Panc1 (cell line): ENCODE measurements at regions of chr6 and their contacts with region 1.

Region 1: GRCh38 chr6:28218271-28219248 is 6.5 kb upstream of the ZSCAN9 start:
- DNase-seq: no peak
- ATAC-seq: peak; percentile 90
- H3K4me3 ChIP-seq: peak overlapping the region; percentile 55 to 77
- H3K27ac ChIP-seq: peak overlapping the region; percentile 92
- H3K4me1 ChIP-seq: peaks cover 33% of the 10 kb centered on the region
- H3K27me3 ChIP-seq: no peaks in the 10 kb centered on the region
- CTCF ChIP-seq: no peak

Region 2: DNA sequence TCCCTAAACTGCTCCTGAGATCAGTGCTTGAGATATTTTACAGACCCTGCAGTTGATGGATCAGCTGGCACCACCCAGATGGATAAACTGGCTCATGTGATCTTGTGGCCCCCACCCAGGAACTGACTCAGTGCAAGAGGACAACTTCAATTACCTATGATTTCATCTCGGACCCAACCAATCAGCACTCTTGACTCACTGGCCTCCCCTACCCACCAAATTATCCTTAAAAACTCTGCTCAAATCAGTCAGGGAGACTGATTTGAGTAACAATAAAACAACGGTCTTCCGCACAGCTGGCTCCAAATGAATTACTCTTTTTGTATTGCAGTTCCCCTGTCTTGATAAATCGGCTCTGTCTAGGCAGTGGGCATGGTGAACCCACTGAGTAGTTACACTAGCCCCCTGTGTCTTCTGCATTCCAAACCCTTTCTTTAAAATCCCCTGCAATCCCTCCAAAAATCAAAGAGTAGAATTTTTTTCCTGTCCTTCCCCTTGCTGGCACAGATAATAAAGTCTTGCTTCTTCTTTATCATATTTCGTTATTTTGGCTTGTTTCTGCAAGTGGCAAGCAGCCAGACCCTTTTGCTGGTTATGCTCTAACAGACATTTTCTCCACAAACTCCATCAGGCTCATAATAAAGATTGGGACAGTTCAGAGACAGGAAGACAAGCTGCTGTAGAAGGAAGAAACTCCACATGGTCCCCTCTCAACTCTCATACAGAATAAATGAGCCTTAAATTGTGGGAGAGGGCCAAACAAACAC is 213.3 kb before region 1 on chr6:
- CTCF ChIA-PET with region 1: no interaction called
- POLR2A ChIA-PET with region 1: no interaction called
- in situ Hi-C with region 1: no loop called
- intact Hi-C with region 1: no loop called
- DNase-seq: no peak
- ATAC-seq: no peak
- H3K4me3 ChIP-seq: no peak overlapping the region
- H3K27ac ChIP-seq: no peak overlapping the region
- H3K4me1 ChIP-seq: no peaks in the 10 kb centered on the region
- H3K27me3 ChIP-seq: no peaks in the 10 kb centered on the region
- CTCF ChIP-seq: no peak

Region 3: DNA sequence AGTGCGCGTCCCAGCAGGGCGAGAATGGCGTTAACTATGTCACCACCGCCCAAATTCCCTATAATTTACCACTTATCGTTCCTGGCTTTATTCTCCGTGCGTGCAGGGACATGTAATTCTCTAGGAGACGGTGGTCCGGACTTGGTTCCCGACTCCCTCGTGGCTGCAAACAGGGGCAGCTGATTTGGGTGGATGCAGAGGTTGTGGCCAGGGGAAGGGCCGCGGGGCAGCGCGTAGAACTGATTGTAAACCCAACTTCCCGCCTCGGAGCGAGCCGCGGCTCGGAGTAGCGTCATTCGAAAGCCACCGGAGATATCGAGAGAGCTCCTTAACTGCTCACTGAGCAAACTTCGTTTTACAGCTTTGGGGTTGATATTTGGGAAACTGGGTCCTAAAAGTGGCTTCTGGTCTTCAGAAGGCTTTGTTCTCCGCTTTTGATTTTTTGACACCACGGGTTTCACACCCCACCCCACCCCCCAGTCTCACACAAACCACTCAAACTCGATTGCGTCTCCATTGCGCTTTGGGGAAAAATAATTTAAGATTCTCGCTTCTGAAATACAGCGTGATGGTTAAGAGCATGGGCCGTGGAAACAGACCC is 10.9 kb before region 1 on chr6:
- CTCF ChIA-PET with region 1: no interaction called
- POLR2A ChIA-PET with region 1: interaction called, 18 read pairs
- in situ Hi-C with region 1: no loop called
- intact Hi-C with region 1: no loop called
- DNase-seq: no peak
- ATAC-seq: peak; percentile 85
- H3K4me3 ChIP-seq: peak overlapping the region; percentile 46 to 59
- H3K27ac ChIP-seq: peak overlapping the region; percentile 64
- H3K4me1 ChIP-seq: peaks cover 3% of the 10 kb centered on the region; the same call in 1 of the 2 replicates
- H3K27me3 ChIP-seq: no peaks in the 10 kb centered on the region
- CTCF ChIP-seq: no peak